Brain microvascular endothelial cell (primary cell): ENCODE measurements at regions of chr20 and their contacts with region 1.

Region 1: DNA sequence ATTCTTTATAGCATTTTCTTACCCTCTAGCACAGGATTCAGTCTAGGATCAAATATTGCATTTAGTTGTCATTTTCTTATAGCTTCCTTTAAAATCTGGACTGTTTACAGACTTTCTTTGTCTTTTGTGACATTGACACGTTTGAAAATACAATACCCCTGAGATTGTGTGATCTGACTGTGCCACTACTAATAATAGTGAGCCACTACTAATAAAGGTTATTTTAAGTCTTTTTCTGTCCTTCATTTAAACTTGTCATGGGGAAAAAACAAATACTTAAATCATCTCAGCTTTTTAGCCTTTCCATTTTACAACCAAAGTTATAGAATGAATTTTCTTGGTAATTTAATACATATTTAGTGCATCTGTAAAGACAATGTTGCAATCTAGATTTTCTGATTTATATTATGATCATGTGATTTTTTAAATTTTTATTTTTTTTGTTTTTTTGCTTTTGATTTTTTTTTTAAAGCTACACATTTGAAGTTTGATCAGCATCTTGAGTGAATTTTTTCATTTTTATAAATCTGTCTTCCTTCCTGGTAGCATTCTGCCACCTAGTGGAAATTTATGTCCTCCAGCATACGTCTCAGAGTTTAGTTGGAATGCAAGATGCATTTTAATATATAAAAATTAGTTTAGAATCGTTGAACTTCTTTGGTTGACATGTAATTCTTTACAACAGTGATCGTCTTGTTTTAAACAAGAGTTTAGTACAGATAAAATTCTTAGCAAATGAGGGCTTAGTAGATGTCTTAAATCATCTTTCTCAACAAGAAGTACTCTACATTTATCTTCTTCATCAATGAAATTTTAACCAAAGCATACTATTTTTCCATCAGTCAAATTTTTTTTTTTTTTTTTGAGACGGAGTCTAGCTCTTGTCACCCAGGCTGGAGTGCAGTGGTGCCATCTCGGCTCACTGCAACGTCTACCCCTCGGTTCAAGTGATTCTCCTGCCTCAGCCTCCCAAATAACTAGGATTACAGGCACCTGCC is 119.4 kb downstream of the NCOA3 start:
- DNase-seq: peak; percentile 42
- H3K4me3 ChIP-seq: no peak overlapping the region
- H3K27ac ChIP-seq: no peak overlapping the region
- H3K27me3 ChIP-seq: no peaks in the 10 kb centered on the region
- CTCF ChIP-seq: peak; percentile 65

Region 2: GRCh38 chr20:47241345-47241781 is 379.7 kb before region 1 on chr20:
- in situ Hi-C with region 1: loop called (anchors 25 kb)
- DNase-seq: peak; percentile 20
- H3K4me3 ChIP-seq: no peak overlapping the region
- H3K27ac ChIP-seq: no peak overlapping the region
- H3K27me3 ChIP-seq: no peaks in the 10 kb centered on the region
- CTCF ChIP-seq: no peak

Region 3: DNA sequence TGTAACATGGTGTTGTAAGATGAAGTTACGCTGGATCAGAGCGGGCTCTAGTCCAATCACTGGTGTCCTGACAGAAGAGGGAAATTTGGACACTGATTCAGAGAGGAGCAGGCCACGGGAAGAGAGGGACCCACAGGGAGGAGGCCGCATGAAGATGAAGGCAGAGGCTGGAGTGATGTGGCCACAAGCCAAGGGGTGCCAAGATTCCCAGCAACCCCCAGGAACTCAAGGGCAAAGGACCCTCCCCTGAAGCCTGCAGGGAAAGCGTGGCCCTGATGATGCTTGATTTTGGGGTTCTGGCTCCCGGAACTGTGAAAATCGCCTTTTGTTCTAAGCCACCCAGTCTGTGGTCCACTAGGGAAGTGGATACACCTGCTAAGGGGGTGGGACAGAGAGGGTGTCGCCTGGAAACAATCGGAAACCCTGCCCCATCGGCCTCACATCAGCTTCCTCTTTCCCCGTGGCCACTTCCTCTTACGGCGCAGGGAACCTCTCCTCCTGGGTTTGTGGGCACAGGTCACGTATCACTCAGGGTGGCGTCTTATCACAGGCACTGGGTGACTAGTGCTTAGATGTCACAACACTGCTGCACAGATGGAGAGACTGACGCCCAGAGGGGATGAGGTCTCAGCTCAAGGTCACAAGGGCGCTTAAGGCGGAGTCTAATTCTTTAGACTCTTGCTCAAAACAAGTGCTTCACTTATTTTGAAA is 106.2 kb after region 1 on chr20:
- in situ Hi-C with region 1: no loop called
- DNase-seq: no peak
- H3K4me3 ChIP-seq: no peak overlapping the region
- H3K27ac ChIP-seq: no peak overlapping the region
- H3K27me3 ChIP-seq: peaks cover 2% of the 10 kb centered on the region
- CTCF ChIP-seq: no peak

Region 4: DNA sequence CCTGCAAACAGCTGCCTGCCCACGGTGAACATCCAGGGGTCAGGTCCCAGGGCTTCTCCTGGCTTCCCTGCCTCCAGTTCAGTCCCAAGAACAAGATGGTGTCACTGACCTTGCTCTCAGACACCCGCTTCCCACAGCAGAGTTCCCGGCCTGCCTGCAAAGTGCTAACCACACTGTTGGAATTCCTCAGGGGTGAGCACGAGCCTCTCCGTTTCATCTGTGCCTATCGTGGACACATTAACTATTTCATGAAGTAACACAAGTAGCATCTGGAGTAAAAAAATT is 254.5 kb after region 1 on chr20:
- in situ Hi-C with region 1: no loop called
- DNase-seq: peak; percentile 18
- H3K4me3 ChIP-seq: no peak overlapping the region
- H3K27ac ChIP-seq: no peak overlapping the region
- H3K27me3 ChIP-seq: no peaks in the 10 kb centered on the region
- CTCF ChIP-seq: no peak